GM12878 (cell line): ENCODE measurements at regions of chr14 and their contacts with region 1.

Region 1: GRCh38 chr14:105456736-105457617 is 17.6 kb upstream of the CRIP2 start:
- DNase-seq: no peak
- ATAC-seq: no peak
- H3K4me3 ChIP-seq: no peak overlapping the region
- H3K27ac ChIP-seq: no peak overlapping the region
- H3K4me1 ChIP-seq: no peaks in the 10 kb centered on the region
- H3K27me3 ChIP-seq: no peaks in the 10 kb centered on the region
- CTCF ChIP-seq: no peak
- EP300 ChIP-seq: no peak
- POLR2A ChIP-seq: no peak
- RAD21 ChIP-seq: no peak

Region 2: GRCh38 chr14:105473677-105474482 is 16.9 kb after region 1 on chr14:
- CTCF ChIA-PET with region 1: no interaction called
- POLR2A ChIA-PET with region 1: no interaction called
- RAD21 ChIA-PET with region 1: no interaction called
- SMC1A ChIA-PET with region 1: no interaction called
- in situ Hi-C with region 1: no loop called
- intact Hi-C with region 1: no loop called
- DNase-seq: no peak
- ATAC-seq: peak; percentile 63
- H3K4me3 ChIP-seq: peak overlapping the region; percentile 44; the same call in 1 of the 2 replicates
- H3K27ac ChIP-seq: no peak overlapping the region
- H3K4me1 ChIP-seq: no peaks in the 10 kb centered on the region
- H3K27me3 ChIP-seq: peaks cover 4 to 11% of the 10 kb centered on the region in 2 experiments; a peak in 3 of 4 replicates
- CTCF ChIP-seq: no peak
- EP300 ChIP-seq: no peak
- POLR2A ChIP-seq: no peak
- RAD21 ChIP-seq: no peak

Region 3: DNA sequence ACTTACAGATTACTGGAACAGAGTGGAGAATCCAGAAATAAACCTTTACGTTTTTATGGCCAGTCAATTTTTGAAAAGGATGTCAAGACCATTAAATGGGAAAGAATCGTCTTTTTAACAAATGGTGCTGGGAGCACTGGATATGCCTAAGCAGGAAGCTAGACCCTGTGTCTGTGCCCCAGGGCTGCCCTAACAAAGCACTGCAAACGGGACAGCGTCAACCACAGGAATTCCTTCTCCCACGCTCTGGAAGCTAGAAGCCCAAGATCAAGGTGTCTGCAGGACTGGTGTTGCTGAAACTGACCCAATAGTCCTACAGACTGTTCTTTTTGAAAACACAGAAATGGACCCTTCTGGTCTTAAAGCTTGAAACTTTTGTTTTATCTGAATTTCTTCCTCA is 60.1 kb after region 1 on chr14:
- CTCF ChIA-PET with region 1: no interaction called
- POLR2A ChIA-PET with region 1: no interaction called
- RAD21 ChIA-PET with region 1: no interaction called
- SMC1A ChIA-PET with region 1: no interaction called
- in situ Hi-C with region 1: loop called (anchors 5 kb)
- intact Hi-C with region 1: no loop called
- DNase-seq: no peak
- ATAC-seq: no peak
- H3K4me3 ChIP-seq: no peak overlapping the region
- H3K27ac ChIP-seq: no peak overlapping the region
- H3K4me1 ChIP-seq: no peaks in the 10 kb centered on the region
- H3K27me3 ChIP-seq: peaks cover 0 to 3% of the 10 kb centered on the region in 2 experiments; a peak in 1 of 4 replicates
- CTCF ChIP-seq: no peak
- EP300 ChIP-seq: no peak
- POLR2A ChIP-seq: no peak
- RAD21 ChIP-seq: no peak